GM12878 (cell line): ENCODE measurements at regions of chr4 and their contacts with region 1.

Region 1: DNA sequence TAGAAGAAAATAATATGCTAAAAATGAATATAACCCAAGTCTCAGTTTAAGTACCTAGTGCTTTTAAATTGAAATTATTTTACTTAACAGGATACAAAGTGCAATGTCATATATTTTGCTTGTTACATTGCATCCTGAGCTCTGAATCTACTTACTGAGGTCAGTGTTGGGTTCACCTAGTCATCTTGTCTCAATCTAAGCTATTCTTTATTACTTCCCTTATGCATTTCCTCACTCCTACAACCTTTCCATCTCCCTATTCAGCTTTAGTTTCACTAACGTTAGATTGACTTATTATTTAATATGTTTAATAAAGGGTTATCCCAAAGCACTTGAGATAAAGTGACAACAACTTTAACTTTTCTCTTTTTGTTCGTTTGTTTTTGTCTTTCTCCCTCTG is 483.7 kb downstream of the FSTL5 start:
- DNase-seq: no peak
- ATAC-seq: peak; percentile 36; the same call in 2 of the 3 replicates
- H3K4me3 ChIP-seq: no peak overlapping the region
- H3K27ac ChIP-seq: no peak overlapping the region
- H3K4me1 ChIP-seq: no peaks in the 10 kb centered on the region
- H3K27me3 ChIP-seq: no peaks in the 10 kb centered on the region
- CTCF ChIP-seq: no peak
- EP300 ChIP-seq: no peak
- POLR2A ChIP-seq: no peak
- RAD21 ChIP-seq: no peak

Region 2: GRCh38 chr4:161728929-161729328 is 48.8 kb after region 1 on chr4:
- CTCF ChIA-PET with region 1: no interaction called
- POLR2A ChIA-PET with region 1: no interaction called
- RAD21 ChIA-PET with region 1: no interaction called
- SMC1A ChIA-PET with region 1: interaction called, 3 read pairs
- in situ Hi-C with region 1: no loop called
- intact Hi-C with region 1: loop called (anchors 5 kb)
- DNase-seq: no peak
- ATAC-seq: peak; percentile 80
- H3K4me3 ChIP-seq: no peak overlapping the region
- H3K27ac ChIP-seq: no peak overlapping the region
- H3K4me1 ChIP-seq: no peaks in the 10 kb centered on the region
- H3K27me3 ChIP-seq: no peaks in the 10 kb centered on the region
- CTCF ChIP-seq: no peak
- EP300 ChIP-seq: no peak
- POLR2A ChIP-seq: no peak
- RAD21 ChIP-seq: no peak